Activated T-helper 1 cell treated with anti-CD3 and anti-CD28 coated beads, Interleukin-12 subunit alpha, Interleukin-12 subunit beta, Interleukin-2, Interleukin-4 antibody, amounts not matched to agents 30 ng/mL and 10 ng/mL and 1 ng/mL, durations not matched to agents 14 hours and 24 hours and 36 hours (primary cell): ENCODE measurements at regions of chr22 and their contacts with region 1.

Region 1: GRCh38 chr22:30005213-30005857 is 74.9 kb upstream of the HORMAD2 start:
- DNase-seq: peak; percentile 41
- H3K4me3 Mint-ChIP-seq: no peak overlapping the region
- H3K27ac Mint-ChIP-seq: no peak overlapping the region
- H3K4me1 Mint-ChIP-seq: peaks cover 17% of the 10 kb centered on the region
- H3K27me3 Mint-ChIP-seq: no peaks in the 10 kb centered on the region

Region 2: DNA sequence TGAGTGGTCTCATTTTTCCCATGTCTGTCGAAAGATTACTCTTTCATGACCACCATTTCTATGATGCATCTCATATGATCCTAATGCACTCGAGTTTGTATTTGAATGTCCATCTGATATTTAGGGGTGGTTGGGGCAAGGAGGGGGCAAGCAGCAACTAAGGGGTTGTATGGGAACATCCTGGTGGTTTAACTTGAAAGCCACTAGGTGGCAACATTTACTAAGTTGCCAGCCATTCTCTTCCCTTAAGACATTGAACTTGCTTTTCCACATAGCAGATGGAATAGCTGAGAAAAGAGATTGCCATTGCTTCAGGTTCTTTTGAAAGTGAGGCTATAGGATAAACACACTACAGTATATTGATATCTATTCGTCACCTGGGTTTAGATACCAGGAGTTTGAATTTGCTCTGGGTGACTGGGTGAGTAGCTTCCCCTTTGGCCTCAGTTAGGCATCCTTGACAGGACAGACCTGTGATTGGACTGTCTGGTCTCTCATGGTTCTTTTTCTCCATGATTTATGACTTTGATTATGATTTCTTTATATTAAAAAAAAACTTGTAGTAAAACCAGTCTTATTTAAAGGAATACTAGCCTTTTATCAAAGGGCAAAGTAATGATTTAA is 369.5 kb before region 1 on chr22:
- intact Hi-C with region 1: loop called (anchors 2 kb)
- DNase-seq: no peak
- H3K4me3 Mint-ChIP-seq: no peak overlapping the region
- H3K27ac Mint-ChIP-seq: no peak overlapping the region
- H3K4me1 Mint-ChIP-seq: peaks cover 31% of the 10 kb centered on the region
- H3K27me3 Mint-ChIP-seq: no peaks in the 10 kb centered on the region

Region 3: DNA sequence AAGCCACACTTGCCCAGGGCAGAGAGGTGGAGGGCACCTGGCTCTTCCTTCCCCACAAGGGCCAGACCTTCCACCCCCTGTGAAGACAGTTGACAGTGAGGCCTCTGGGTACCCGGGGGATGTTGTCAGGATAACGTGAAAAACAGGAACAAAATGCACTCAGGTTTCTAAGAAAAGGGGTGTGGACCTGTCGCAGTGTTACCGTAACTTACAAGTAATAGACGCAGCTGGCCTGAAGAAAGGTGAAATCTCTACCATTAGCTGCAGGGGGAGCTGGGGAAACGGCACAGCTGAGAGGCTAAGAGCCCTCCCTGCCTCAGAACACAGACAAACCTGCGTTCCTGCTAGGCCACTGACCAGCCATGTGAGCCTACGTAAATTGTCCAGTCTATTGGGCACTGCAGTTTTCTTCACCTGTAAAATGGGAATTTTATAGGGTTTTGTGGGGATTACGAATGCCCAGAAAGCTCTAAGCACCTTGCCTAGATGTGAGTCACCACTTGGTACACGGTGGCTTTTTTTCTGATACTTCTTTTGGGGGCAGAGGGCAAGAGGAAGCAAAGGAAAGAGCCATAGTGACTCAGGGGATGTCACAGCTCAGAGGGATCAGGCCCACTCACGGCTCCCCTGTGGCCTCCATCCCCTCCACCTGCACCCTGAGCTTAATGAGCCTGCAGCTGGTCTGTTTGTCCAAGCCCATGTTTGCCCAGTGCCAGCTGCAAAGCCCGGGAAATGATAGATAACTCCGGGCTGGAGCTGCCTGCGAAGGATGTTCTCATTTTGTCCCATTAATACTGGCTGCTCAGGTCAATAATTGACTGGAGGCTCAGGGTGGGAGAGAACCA is 304.0 kb before region 1 on chr22:
- intact Hi-C with region 1: loop called (anchors 10 kb)
- DNase-seq: peak; percentile 5
- H3K4me3 Mint-ChIP-seq: no peak overlapping the region
- H3K27ac Mint-ChIP-seq: no peak overlapping the region
- H3K4me1 Mint-ChIP-seq: peaks cover 14% of the 10 kb centered on the region
- H3K27me3 Mint-ChIP-seq: no peaks in the 10 kb centered on the region

Region 4: DNA sequence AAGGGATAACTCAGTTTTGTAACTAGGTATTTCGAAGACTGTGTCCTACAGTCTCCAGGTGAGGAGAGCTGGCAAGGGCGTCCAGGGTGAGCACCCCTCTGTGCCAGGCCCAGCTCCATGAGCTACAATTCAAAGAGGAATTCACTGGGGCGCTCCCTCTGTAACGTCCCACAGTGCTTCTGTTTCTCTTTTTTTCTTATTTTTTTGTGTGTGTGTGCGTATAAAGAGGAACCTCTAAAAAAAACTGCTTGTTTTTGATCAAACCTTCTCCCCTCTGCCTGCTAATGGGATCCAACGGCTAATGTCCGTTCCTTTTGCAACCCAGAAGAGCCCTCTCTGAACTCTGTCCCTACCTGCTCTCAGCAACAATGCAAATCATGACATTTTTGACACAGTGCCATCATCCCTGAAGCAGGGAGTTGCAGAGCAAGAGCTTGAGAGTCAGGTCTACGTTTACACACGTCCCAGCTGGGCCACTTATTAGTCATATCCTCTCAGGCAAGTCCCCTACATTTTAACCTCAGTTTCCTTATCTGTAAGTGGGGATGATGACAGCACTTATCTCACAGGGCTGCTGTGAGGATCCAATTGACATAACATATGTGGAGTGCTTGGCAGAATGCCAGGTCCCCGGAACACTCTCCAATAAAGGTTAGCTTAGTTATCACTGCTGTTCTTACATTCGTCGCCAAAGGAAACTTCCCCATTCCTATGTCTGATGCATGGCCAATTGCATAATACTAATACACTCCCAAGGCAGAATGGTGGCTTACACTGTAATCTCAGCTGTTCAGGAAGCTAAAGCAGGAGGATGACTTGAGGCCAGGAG is 184.2 kb before region 1 on chr22:
- intact Hi-C with region 1: loop called (anchors 1 kb)
- DNase-seq: peak; percentile 37
- H3K4me3 Mint-ChIP-seq: no peak overlapping the region
- H3K27ac Mint-ChIP-seq: peak overlapping the region; percentile 81
- H3K4me1 Mint-ChIP-seq: peaks cover 15% of the 10 kb centered on the region
- H3K27me3 Mint-ChIP-seq: no peaks in the 10 kb centered on the region